ENCODE measurements at regions of chr3 and their contacts with region 1.

Region 1: DNA sequence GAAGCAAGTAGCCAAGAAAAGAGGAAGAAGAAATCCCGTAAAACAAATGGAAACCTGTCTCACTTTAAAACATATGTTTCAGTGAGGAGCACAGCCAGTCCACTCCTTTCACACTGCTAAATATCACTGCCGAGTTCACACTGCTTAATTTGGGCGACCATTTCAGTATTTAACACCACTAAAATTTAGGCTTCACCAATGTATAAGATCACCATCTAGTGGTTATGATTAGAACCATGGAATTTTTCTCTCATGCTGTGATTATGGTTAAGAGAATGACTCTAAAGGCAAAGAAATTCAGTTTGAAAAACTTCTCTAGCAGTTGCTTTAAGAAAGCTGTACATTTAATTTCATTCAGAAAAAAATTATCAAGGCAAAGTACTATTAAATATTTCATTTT is 16.6 kb downstream of the SLC4A7 start:
- DNase-seq: no peak
- H3K4me3 ChIP-seq: no peak overlapping the region
- H3K27ac ChIP-seq: no peak overlapping the region
- H3K27me3 ChIP-seq: no peaks in the 10 kb centered on the region
- CTCF ChIP-seq: peak; percentile 65

Region 2: GRCh38 chr3:27079427-27080257 is 387.9 kb before region 1 on chr3:
- CTCF ChIA-PET with region 1: no interaction called
- POLR2A ChIA-PET with region 1: no interaction called
- DNase-seq: no peak
- H3K4me3 ChIP-seq: no peak overlapping the region
- H3K27ac ChIP-seq: no peak overlapping the region
- H3K27me3 ChIP-seq: no peaks in the 10 kb centered on the region
- CTCF ChIP-seq: no peak

Region 3: DNA sequence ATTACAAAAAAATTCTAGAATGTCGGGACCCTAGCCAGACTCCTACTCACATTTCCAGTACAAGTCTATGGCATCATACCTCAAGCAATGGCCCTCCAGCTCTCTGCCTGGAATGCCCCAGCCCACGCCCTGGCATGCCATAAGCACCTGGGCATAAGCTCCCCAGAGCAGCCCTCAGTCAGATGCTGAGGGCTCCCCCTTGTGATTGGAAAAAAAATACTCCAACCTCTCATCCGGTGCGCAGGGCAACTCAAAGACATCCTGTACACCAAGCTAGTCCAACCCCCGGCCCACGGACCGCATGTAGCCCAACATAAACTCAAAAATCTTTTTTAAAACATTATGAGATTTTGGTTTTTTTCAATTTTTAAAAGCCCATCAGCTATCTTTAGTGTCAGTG is 213.7 kb before region 1 on chr3:
- CTCF ChIA-PET with region 1: interaction called, 14 read pairs
- POLR2A ChIA-PET with region 1: no interaction called
- DNase-seq: no peak
- H3K4me3 ChIP-seq: no peak overlapping the region
- H3K27ac ChIP-seq: no peak overlapping the region
- H3K27me3 ChIP-seq: no peaks in the 10 kb centered on the region
- CTCF ChIP-seq: peak; percentile 60

Region 4: GRCh38 chr3:27428446-27428845 is 39.1 kb before region 1 on chr3:
- CTCF ChIA-PET with region 1: interaction called, 12 read pairs
- POLR2A ChIA-PET with region 1: interaction called, 3 read pairs
- DNase-seq: no peak
- H3K4me3 ChIP-seq: no peak overlapping the region
- H3K27ac ChIP-seq: no peak overlapping the region
- H3K27me3 ChIP-seq: no peaks in the 10 kb centered on the region
- CTCF ChIP-seq: no peak

Region 5: GRCh38 chr3:27456554-27456953 is 11.0 kb before region 1 on chr3:
- CTCF ChIA-PET with region 1: interaction called, 37 read pairs
- POLR2A ChIA-PET with region 1: no interaction called
- DNase-seq: no peak
- H3K4me3 ChIP-seq: no peak overlapping the region
- H3K27ac ChIP-seq: no peak overlapping the region
- H3K27me3 ChIP-seq: no peaks in the 10 kb centered on the region
- CTCF ChIP-seq: no peak